ENCODE measurements at regions of chr1 and their contacts with region 1.

Region 1: GRCh38 chr1:21896652-21897532 is 40.2 kb downstream of the HSPG2 start:
- DNase-seq: peak; percentile 88
- ATAC-seq: peak; percentile 76 to 86

Region 2: GRCh38 chr1:21618561-21619374 is 278.1 kb before region 1 on chr1:
- intact Hi-C with region 1: no loop called
- DNase-seq: no peak
- ATAC-seq: peak in 1 of 2 donors; percentile 6

Region 3: DNA sequence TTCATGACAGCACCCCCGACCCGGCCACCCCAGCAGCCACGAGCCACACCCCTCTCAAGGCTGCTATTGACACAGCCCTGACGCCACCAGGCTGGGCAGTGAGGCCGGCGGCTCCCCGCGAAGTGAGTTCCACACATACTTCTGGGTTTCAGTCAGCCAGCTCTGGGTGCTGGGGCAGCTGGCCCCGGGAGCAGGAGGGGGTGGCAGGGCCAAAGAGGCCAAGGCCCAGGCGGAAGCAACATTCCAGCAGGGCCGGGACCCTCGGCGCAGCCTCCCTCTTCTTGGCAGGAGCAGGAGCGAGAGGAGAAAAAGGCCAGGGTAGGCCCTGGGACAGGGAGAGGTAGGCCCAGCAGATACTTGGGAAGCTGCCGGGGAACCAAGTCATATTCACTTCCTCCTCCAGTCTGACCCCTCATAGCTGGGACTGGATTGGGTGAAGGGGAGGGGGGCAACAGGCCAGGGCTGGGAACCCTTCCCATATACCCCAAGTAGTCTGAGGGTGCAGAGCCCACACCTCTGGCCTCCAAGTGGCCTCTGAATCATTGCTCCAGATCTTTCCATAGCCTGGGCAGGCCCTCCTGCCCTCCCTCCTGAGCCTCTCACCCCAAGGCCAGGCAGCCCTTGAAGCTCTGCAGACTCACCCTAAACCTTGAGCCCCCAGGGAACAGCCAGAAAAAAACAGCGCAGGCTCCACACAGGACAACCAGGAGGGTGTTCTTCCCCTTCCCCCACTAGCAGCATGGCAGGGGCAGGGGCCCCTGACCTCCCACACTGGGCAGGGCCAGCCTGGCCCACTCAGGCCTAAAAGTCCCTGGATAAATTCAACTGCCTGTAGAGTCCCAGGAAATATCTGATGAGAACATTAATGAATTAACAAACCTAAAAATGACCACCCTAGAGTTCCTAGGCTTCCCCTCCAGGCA is 34.5 kb after region 1 on chr1:
- intact Hi-C with region 1: loop called (anchors 5 kb)
- DNase-seq: peak; percentile 80
- ATAC-seq: peak; percentile 56

Region 4: DNA sequence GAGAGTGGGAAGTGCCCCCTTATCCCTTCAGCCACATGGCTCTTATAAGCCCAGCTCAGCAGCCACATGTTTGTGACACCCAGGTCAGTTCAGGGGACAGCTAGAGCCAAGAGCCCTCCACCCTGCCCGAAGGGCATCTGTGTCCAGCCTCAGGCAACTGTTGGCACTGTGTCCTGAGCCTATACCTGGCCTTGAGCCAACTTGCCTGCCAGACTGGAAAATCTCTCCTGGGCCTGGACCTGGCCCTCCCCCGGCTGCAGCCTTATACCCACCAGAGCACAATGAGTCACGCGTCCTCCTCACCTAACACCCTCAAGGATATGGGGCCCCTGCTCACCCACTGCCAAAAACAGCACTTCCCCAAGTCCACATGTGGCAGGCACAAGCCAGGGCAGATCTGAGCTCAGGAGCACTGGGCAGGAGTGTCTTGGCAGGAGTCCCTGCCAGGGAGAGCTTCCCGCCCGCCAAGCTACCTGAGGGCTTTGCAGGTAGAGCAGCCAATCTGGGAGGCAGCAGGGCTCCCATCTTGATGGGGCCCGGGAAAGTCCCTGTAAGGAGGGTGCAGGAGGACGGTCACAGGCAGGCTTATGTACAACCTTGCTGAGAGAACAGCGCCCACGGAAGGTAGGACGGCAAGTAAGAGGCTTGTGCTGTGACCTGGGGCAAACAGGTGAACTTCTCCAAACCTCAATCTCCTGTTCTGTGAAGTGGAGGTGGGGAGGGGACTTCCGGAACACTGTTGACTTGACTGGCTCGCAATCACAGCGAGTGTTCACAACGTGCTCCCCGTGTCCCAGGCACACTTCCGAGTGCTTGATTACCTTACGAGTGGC is 60.0 kb after region 1 on chr1:
- intact Hi-C with region 1: loop called (anchors 5 to 10 kb)
- DNase-seq: peak; percentile 79
- ATAC-seq: peak; percentile 71 to 93

Region 5: DNA sequence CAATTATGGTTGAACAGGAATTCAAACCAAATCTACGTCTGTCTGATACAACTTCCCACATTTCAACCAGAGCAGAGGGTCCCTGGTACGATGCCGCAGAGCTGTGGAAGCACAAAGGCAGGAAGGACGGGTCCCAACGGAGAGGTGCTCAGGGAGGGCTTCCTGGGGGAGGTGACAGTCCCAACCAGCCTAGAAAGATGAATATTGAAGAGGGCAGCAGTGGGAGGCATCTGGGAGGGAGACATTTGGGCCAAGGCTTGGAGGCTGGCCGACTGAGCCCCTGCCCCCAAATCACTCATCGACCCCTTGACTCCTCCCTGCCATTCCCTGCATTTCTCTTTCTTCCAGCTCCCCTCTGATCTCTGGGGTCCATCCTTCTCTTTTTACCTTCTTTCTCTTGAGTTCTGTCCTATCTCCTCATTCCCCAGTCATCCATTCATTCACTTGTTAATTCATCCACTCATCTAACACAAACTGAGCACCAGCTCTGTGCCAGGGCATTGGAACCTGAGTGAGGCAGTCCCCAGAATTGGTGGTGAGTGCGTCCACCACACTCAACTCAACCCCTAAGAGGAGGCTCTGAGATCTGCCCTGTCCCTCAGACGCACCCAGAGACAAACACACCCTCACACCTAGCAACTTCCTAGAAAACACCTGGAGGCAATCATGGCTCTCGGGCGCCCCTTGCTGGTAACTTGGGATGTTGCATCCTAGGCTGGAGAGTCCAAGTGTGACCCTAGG is 66.8 kb after region 1 on chr1:
- intact Hi-C with region 1: loop called (anchors 5 to 10 kb)
- DNase-seq: peak; percentile 78
- ATAC-seq: peak; percentile 89 to 91

Region 6: GRCh38 chr1:22105611-22106207 is 208.8 kb after region 1 on chr1:
- intact Hi-C with region 1: no loop called
- DNase-seq: no peak
- ATAC-seq: peak; percentile 28 to 41

Measured in left cardiac atrium (tissue), 4 donors.